ENCODE measurements at regions of chr4 and their contacts with region 1.

Region 1: GRCh38 chr4:84582302-84583000 is 476 bp upstream of the CDS1 start:
- DNase-seq: peak; percentile 83
- H3K4me3 Mint-ChIP-seq: peak overlapping the region; percentile 72
- H3K27ac Mint-ChIP-seq: no peak overlapping the region
- H3K4me1 Mint-ChIP-seq: peaks cover 14% of the 10 kb centered on the region
- H3K27me3 Mint-ChIP-seq: peaks cover 53% of the 10 kb centered on the region

Region 2: DNA sequence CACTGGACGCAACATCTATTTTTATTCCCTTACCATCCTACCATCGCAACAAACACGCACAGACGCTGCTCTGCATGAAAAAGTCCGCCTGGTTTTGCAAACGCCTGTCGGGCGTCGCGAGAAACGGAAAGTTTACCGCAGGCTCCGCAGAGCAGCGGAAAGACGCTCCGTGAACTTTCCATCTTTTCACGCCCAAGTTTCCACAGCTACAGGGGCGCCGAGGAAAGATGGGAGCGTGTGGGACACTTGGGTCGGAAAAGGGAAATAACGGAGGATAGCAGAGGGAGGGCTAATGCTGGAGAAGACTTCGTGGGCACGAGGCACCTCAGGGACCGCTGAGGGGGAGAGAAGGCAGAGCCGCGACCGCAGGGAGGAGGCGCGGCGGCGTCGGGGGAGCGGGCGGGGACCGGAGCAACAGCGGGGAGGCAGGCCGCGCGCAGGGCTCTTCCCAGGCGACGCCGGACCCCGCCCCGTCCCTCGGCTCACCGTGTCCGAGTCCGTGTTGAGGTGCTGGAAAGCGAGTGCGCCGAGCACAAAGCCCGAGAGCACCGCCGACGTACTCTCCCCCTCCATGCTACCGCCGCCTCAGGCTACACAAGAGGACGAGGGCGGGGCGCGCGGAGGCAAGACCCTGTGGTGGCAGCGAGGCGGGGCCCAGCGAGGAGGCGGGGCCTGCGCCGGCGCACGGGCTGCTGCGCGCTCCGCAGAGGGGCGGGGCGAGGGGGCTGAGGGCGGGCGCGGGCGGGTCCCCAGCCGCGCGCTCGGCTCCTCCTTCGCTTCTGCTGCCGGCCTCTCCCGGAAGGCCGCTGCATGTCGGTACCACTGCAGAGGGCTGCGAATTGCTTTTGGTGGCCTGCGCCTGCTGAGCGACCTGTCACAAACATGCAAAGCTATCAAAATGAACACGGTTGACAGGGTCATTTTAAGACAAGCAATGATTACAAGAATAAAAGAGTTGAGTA is 1097.7 kb before region 1 on chr4 and contains the start of gene ABRAXAS1:
- intact Hi-C with region 1: loop called (anchors 1 kb)
- DNase-seq: peak; percentile 91
- H3K4me3 Mint-ChIP-seq: peak within 1 kb of the TSS; percentile 90
- H3K27ac Mint-ChIP-seq: peak within 1 kb of the TSS; percentile 95
- H3K4me1 Mint-ChIP-seq: peaks cover 10% of the 10 kb centered on the region
- H3K27me3 Mint-ChIP-seq: peaks cover under 1% of the 10 kb centered on the region
- total RNA-seq, gene ABRAXAS1: 11.0 and 11.3 TPM in 2 replicates

Region 3: DNA sequence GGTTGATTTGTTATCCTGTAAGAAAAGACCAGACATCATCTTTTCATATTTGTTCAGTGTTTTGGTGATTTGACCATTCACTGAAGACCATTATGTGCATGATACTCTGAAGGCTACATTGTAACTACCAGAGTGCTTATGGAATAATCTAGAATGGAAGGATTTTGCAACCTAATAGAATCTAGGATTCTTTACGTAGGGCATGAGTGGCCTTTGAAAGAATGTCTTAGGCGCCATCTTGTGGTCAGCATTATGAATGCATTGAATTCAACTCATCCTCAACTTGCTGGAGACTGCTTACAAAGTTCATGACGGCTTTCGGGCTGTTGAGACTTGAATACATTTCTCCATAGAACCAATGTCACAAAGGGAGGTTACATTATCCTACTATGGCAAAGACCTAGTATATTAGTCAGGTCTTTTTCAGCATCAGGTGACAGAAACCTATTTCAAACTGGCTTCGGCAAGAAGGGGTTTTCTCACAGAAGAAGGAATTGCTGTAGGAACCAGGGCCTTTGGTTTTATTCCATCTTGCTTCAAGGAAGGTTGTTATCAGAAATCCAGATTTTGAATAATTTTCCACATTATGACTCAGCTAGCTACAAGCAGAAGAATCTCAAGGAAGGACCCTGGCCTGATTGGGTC is 942.5 kb before region 1 on chr4:
- intact Hi-C with region 1: loop called (anchors 5 kb)
- DNase-seq: peak; percentile 31
- H3K4me3 Mint-ChIP-seq: no peak overlapping the region
- H3K27ac Mint-ChIP-seq: no peak overlapping the region
- H3K4me1 Mint-ChIP-seq: peaks cover 4% of the 10 kb centered on the region
- H3K27me3 Mint-ChIP-seq: peaks cover 6% of the 10 kb centered on the region

Region 4: GRCh38 chr4:84503495-84504437 is 78.7 kb before region 1 on chr4:
- intact Hi-C with region 1: loop called (anchors 2 kb)
- DNase-seq: no peak
- H3K4me3 Mint-ChIP-seq: no peak overlapping the region
- H3K27ac Mint-ChIP-seq: peak overlapping the region; percentile 46
- H3K4me1 Mint-ChIP-seq: peaks cover 5% of the 10 kb centered on the region
- H3K27me3 Mint-ChIP-seq: peaks cover 65% of the 10 kb centered on the region

Region 5: DNA sequence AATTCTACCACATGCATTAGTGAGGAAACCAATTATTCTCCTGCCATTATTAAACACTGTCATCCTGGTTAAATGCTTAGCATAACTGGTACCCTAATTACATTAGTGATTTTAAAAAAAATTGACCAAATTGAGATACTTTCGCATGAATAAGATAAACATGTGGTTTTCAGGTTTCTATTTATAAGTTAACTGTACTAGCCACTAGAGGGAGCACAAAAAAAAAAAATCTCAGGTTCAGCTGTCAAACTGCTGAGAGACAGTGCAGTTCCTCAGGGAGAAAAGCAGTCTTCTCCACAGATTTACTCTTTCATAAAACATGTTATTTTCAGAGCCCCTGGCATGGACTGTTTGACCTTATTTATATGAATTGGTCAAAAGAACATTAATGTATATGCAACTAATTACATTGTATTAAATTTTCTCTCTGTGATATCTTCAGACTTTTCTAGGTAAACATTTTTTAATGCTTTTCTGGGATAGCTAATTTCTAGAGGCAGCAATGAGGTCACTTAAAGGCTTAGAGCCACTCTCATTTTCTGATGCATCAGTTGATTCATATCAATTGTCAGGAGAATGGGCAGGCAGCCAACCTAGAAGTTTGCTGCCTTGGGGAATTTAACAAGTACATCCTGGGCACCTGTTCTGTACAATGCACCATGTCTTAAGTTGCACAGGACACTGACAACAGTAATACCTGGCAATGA is 168.0 kb after region 1 on chr4:
- intact Hi-C with region 1: loop called (anchors 1 kb)
- DNase-seq: no peak
- H3K4me3 Mint-ChIP-seq: no peak overlapping the region
- H3K27ac Mint-ChIP-seq: no peak overlapping the region
- H3K4me1 Mint-ChIP-seq: no peaks in the 10 kb centered on the region
- H3K27me3 Mint-ChIP-seq: peaks cover 5% of the 10 kb centered on the region

Region 6: DNA sequence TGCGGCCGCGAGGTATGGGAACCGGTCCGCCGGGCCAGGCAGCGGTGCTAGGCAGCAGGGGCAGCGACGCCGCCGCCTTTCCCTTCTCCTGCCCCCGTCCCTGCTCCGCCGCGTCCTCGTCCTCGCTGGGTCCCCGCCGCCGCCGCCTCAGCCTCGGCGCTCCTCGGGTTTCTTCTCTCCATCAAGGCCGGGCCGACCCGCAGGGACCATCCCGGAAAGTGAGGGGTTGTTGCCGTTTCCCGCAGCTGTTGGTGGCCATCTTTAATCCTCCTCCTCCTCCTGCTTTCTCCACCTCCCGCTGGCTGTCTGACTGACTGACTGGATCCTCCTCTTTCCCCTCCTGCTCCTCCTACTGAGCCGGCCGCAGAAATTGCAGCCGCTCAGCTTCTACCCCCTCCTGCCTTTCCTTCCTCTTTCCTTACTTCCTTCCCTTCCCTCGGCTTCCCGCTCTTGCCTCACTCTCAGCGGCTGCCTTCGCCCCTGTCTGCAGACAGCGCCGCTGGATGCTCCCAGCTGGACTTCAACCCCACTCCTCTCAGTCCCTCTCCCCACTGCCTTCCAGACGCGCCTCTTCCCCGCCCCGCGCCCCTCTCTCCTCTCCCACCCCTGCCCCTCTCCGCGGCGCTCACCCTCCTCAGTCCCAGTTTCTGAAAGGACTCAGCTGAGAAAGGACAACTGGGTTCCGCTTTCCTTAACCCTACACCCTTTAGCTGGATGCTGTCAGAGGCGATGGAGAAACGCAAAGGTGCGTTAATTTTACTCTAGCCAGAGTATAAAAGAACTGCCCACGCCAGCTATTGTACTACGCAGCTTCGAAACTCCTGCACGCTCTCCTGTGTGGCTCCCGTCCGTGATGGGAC is 384.2 kb after region 1 on chr4 and contains the start of gene WDFY3:
- intact Hi-C with region 1: loop called (anchors 2 kb)
- DNase-seq: no peak
- H3K4me3 Mint-ChIP-seq: peak within 1 kb of the TSS; percentile 82
- H3K27ac Mint-ChIP-seq: no peak within 1 kb of the TSS
- H3K4me1 Mint-ChIP-seq: peaks cover 10% of the 10 kb centered on the region
- H3K27me3 Mint-ChIP-seq: peaks cover 40% of the 10 kb centered on the region
- total RNA-seq, gene WDFY3: 0.39 and 1.1 TPM in 2 replicates